SK-N-SH (cell line): ENCODE measurements at regions of chr11 and their contacts with region 1.

Region 1: GRCh38 chr11:118689851-118690552 is 10.6 kb upstream of the TREH start:
- DNase-seq: peak; percentile 97
- H3K4me3 ChIP-seq: peak overlapping the region; percentile 39 to 62
- H3K27ac ChIP-seq: peak overlapping the region; percentile 70 to 91; a peak in 3 of 4 replicates
- H3K4me1 ChIP-seq: peaks cover 5 to 15% of the 10 kb centered on the region in 2 experiments; a peak in 2 of 4 replicates
- H3K27me3 ChIP-seq: no peaks in the 10 kb centered on the region
- CTCF ChIP-seq: peak; percentile 89
- EP300 ChIP-seq: peak in 1 of 2 experiments; percentile 73; a peak in 2 of 4 replicates
- RAD21 ChIP-seq: peak; percentile 81

Region 2: DNA sequence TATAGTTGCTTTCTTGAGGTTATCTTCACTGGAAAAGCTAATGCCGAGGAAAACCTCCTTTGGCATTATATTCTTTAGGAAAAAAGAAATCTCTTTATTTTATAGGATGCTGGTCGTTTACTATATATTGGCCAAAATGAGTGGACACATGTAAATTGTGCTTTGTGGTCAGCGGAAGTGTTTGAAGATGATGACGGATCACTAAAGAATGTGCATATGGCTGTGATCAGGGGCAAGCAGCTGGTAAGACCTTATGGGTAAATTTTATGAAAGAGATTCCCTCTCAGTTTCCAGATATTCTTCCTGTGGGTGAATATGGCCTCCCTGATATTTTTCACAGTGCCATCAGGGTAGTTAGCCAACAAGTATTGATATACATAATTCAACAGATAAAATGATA is 192.2 kb before region 1 on chr11:
- CTCF ChIA-PET with region 1: no interaction called
- POLR2A ChIA-PET with region 1: no interaction called
- DNase-seq: no peak
- H3K4me3 ChIP-seq: no peak overlapping the region
- H3K27ac ChIP-seq: no peak overlapping the region
- H3K4me1 ChIP-seq: no peaks in the 10 kb centered on the region
- H3K27me3 ChIP-seq: no peaks in the 10 kb centered on the region
- CTCF ChIP-seq: no peak
- EP300 ChIP-seq: no peak
- RAD21 ChIP-seq: no peak

Region 3: DNA sequence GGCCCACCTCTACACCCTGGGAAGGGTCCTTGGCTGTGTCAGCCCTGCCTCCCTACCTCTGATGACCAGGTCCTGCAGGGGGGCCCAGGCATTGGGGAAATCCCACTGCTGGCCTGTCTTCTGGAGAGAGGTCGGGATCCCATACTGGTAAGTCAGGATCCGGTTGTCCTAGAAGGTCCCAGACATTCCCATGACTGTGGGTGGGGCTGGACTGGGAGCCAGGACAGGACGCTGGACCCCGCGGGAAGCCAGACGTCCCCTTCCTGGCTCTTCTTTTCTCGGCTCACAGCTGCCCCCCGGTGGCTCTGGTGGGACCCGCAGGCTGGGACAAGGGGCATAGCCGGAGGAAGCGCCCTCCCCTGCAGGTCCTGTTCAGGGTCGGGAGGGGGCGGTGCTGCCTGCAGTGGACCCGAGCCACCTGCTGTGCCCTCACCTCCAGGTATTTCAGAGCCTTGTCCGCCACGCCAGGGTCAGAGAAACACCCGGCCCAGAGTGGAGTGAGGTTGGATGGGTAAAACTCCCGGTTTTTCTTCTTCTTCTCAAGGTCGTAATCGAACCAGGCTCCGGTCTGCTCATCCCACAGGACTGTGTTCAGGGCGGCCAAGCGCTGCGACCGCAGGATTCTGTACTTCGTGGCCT is 30.6 kb before region 1 on chr11:
- CTCF ChIA-PET with region 1: interaction called, 26 read pairs
- POLR2A ChIA-PET with region 1: no interaction called
- DNase-seq: peak; percentile 96
- H3K4me3 ChIP-seq: peak overlapping the region in 1 of 2 experiments; percentile 28; a peak in 1 of 4 replicates
- H3K27ac ChIP-seq: peak overlapping the region; percentile 6 to 48; a peak in 3 of 4 replicates
- H3K4me1 ChIP-seq: peaks cover 0 to 12% of the 10 kb centered on the region in 2 experiments; a peak in 1 of 4 replicates
- H3K27me3 ChIP-seq: no peaks in the 10 kb centered on the region
- CTCF ChIP-seq: peak; percentile 89
- EP300 ChIP-seq: no peak
- RAD21 ChIP-seq: peak; percentile 84

Region 4: DNA sequence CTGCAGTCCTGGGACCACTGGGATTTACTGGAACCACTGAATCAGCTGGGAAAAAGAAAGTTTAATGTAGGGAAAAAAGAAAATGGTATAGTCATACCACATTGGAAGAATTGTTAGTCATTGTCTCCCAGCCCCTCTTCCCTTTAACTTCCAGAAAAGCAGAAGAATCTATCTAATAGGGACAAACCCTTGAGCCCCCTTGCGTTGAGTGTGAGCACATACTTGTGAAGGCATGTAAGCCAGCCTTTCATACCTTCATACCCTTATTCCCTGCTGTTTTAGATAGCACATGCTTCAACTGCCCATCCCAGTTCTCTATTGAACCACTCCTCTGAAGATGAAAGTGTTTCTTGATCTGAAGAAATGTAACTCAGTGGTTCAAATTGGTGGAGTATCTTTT is 17.2 kb before region 1 on chr11:
- CTCF ChIA-PET with region 1: interaction called, 11 read pairs
- POLR2A ChIA-PET with region 1: no interaction called
- DNase-seq: no peak
- H3K4me3 ChIP-seq: no peak overlapping the region
- H3K27ac ChIP-seq: no peak overlapping the region
- H3K4me1 ChIP-seq: peaks cover 0 to 4% of the 10 kb centered on the region in 2 experiments; a peak in 1 of 4 replicates
- H3K27me3 ChIP-seq: no peaks in the 10 kb centered on the region
- CTCF ChIP-seq: no peak
- EP300 ChIP-seq: no peak
- RAD21 ChIP-seq: no peak

Region 5: DNA sequence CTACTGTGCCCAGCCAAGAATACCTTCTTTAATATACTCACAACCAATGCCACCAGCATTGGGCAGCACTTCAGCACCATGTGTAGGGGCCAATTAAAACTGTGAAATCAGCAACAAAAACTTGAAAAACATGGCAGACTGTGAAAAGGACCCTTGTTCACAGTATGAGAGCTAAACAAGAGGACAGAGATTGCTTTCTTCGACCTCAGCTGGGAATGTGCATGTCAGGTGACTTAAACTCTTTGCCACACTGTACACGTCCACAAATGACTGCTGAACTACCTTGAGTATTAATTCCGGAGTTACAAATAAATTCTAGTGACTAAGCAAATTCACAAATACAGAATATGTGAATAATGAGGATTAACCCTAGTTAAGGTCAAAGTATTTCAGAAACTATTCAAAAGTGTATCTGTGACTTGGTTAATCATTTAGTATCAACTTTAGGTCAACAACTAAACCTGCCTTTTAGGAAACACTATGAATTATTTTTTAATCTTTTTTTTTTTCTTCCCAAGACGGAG is 67.9 kb after region 1 on chr11:
- CTCF ChIA-PET with region 1: interaction called, 12 read pairs
- POLR2A ChIA-PET with region 1: no interaction called
- DNase-seq: no peak
- H3K4me3 ChIP-seq: no peak overlapping the region
- H3K27ac ChIP-seq: no peak overlapping the region
- H3K4me1 ChIP-seq: peaks cover 0 to 4% of the 10 kb centered on the region in 2 experiments; a peak in 1 of 4 replicates
- H3K27me3 ChIP-seq: no peaks in the 10 kb centered on the region
- CTCF ChIP-seq: no peak
- EP300 ChIP-seq: no peak
- RAD21 ChIP-seq: no peak

Region 6: GRCh38 chr11:118791111-118791965 is 101.3 kb after region 1 on chr11 and contains the start of gene DDX6:
- CTCF ChIA-PET with region 1: interaction called, 101 read pairs
- POLR2A ChIA-PET with region 1: interaction called, 18 read pairs
- DNase-seq: peak; percentile 94
- H3K4me3 ChIP-seq: peak within 1 kb of the TSS; percentile 71 to 90
- H3K27ac ChIP-seq: peak within 1 kb of the TSS; percentile 96 to 97
- H3K4me1 ChIP-seq: peaks cover 4 to 19% of the 10 kb centered on the region in 2 experiments; a peak in 2 of 4 replicates
- H3K27me3 ChIP-seq: no peaks in the 10 kb centered on the region
- CTCF ChIP-seq: peak; percentile 23
- EP300 ChIP-seq: peak in 1 of 2 experiments; percentile 29; a peak in 1 of 4 replicates
- RAD21 ChIP-seq: 0 out of 2 replicates have a peak, but pooled peaks have one; percentile 18
- polyA plus RNA-seq, gene DDX6: 7.9 and 13.0 TPM in 2 replicates

Region 7: DNA sequence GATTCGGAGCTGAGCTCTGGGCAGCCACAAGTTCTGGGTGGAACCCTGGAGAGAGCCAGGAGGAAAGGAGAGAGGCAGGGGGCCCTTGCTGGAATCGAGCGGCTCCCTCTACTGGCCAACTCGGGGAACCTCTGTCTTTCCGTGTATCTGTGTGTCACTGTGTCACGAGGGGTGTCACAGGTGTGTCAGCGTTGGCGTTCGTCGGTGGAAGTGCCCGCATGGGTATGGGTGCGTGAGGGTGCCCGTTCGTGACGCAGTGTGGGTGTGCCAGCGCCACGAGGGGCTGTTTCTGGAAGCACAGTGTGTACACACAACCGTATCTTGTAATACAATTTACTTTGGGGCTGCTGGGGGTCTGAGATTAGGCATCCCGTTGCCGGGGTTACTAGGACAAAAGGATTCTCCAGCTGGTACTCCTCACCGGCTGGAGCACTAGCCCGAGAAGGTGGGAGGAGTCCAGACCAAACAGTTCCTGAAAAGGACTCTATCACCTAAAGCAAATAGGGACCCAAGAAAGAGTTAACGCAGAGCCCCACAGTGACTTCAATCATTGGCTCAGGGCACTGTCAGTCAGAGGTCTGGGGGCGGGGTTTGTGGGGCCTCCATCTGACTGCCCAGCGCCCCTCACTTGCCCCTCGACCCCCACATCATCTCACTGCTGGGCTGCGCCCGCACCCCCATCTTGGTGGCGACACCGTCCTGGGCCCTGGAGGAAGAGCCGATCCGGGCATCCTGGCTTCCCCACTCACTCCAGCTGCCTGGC is 238.3 kb after region 1 on chr11:
- CTCF ChIA-PET with region 1: interaction called, 31 read pairs
- POLR2A ChIA-PET with region 1: no interaction called
- DNase-seq: peak; percentile 95
- H3K4me3 ChIP-seq: peak overlapping the region; percentile 80 to 99
- H3K27ac ChIP-seq: peak overlapping the region; percentile 91 to 93
- H3K4me1 ChIP-seq: peaks cover 9 to 33% of the 10 kb centered on the region in 2 experiments; a peak in 3 of 4 replicates
- H3K27me3 ChIP-seq: no peaks in the 10 kb centered on the region
- CTCF ChIP-seq: peak; percentile 94
- EP300 ChIP-seq: no peak
- RAD21 ChIP-seq: peak; percentile 75

Region 8: DNA sequence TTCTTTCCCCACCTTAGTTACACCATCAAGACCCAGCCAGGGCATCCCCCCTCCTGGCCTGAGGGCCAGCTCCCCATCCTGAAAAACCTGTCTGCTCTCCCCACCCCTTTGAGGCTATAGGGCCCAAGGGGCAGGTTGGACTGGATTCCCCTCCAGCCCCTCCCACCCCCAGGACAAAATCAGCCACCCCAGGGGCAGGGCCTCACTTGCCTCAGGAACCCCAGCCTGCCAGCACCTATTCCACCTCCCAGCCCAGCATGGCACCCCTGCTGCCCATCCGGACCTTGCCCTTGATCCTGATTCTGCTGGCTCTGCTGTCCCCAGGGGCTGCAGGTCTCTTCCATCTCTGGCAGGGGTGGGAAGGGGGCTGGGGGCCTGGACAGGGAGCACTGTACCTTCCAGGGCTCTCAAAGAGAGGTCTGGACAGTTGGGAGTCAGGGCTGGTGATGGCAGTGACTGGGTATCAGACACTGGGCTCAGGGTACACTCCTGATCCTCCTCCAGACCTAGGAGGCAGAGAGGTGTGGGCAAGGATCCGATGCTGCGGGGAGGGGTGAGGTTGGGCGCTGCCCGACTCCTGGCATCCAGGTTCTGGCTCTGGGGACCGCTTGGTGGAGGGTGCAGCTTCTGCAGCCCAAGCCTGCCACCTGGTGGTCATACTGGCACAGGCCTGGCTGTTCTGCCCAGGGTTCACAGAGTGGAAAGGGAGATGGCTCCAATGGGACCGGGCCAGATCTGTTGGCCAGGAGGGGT is 266.3 kb after region 1 on chr11 and contains the start of gene UPK2:
- CTCF ChIA-PET with region 1: interaction called, 22 read pairs
- POLR2A ChIA-PET with region 1: no interaction called
- DNase-seq: peak; percentile 93
- H3K4me3 ChIP-seq: no peak within 1 kb of the TSS; a peak in 1 of 4 replicates
- H3K27ac ChIP-seq: no peak within 1 kb of the TSS
- H3K4me1 ChIP-seq: peaks cover 0 to 6% of the 10 kb centered on the region in 2 experiments; a peak in 1 of 4 replicates
- H3K27me3 ChIP-seq: no peaks in the 10 kb centered on the region
- CTCF ChIP-seq: peak; percentile 93
- EP300 ChIP-seq: no peak
- RAD21 ChIP-seq: peak; percentile 98
- polyA plus RNA-seq, gene UPK2: 0.15 and 0.21 TPM in 2 replicates

Region 9: GRCh38 chr11:119791701-119792151 is 1101.7 kb after region 1 on chr11:
- CTCF ChIA-PET with region 1: no interaction called
- POLR2A ChIA-PET with region 1: no interaction called
- DNase-seq: no peak
- H3K4me3 ChIP-seq: no peak overlapping the region
- H3K27ac ChIP-seq: peak overlapping the region in 1 of 2 experiments; percentile 12; a peak in 1 of 4 replicates
- H3K4me1 ChIP-seq: peaks cover 0 to 53% of the 10 kb centered on the region in 2 experiments; a peak in 1 of 4 replicates
- H3K27me3 ChIP-seq: no peaks in the 10 kb centered on the region
- CTCF ChIP-seq: no peak
- EP300 ChIP-seq: no peak
- RAD21 ChIP-seq: no peak